ENCODE measurements at regions of chr11 and their contacts with region 1.

Region 1: GRCh38 chr11:73661035-73661628 is 14.8 kb downstream of the PLEKHB1 start:
- DNase-seq: no peak
- H3K4me3 ChIP-seq: peak overlapping the region; percentile 27 to 41
- H3K27ac ChIP-seq: peak overlapping the region; percentile 57
- H3K4me1 ChIP-seq: peaks cover 11% of the 10 kb centered on the region
- H3K27me3 ChIP-seq: no peaks in the 10 kb centered on the region
- CTCF ChIP-seq: peak; percentile 91 to 98 (median 93)
- POLR2A ChIP-seq: no peak

Region 2: GRCh38 chr11:73404506-73405145 is 256.5 kb before region 1 on chr11:
- intact Hi-C with region 1: loop called (anchors 5 kb)
- DNase-seq: no peak
- H3K4me3 ChIP-seq: no peak overlapping the region
- H3K27ac ChIP-seq: no peak overlapping the region
- H3K4me1 ChIP-seq: no peaks in the 10 kb centered on the region
- H3K27me3 ChIP-seq: no peaks in the 10 kb centered on the region
- CTCF ChIP-seq: no peak
- POLR2A ChIP-seq: no peak

Region 3: GRCh38 chr11:73625696-73626318 is 35.3 kb before region 1 on chr11:
- intact Hi-C with region 1: loop called (anchors 2 kb)
- DNase-seq: no peak
- H3K4me3 ChIP-seq: no peak overlapping the region
- H3K27ac ChIP-seq: no peak overlapping the region
- H3K4me1 ChIP-seq: no peaks in the 10 kb centered on the region
- H3K27me3 ChIP-seq: no peaks in the 10 kb centered on the region
- CTCF ChIP-seq: peak; percentile 46 to 83 (median 75)
- POLR2A ChIP-seq: no peak